ENCODE measurements at regions of chr1 and their contacts with region 1.

Region 1: GRCh38 chr1:62906428-62906886 is 122.5 kb downstream of the ATG4C start:
- DNase-seq: peak; percentile 29
- ATAC-seq: peak; percentile 94
- H3K4me3 Mint-ChIP-seq: no peak overlapping the region
- H3K27ac Mint-ChIP-seq: no peak overlapping the region
- H3K4me1 Mint-ChIP-seq: peaks cover 17% of the 10 kb centered on the region
- H3K27me3 Mint-ChIP-seq: no peaks in the 10 kb centered on the region
- CTCF ChIP-seq: peak; percentile 51; the same call in 1 of the 2 replicates

Region 2: GRCh38 chr1:62841587-62842169 is 64.8 kb before region 1 on chr1:
- CTCF ChIA-PET with region 1: interaction called, 38 read pairs
- POLR2A ChIA-PET with region 1: no interaction called
- DNase-seq: no peak
- ATAC-seq: peak; percentile 41; the same call in 1 of the 2 replicates
- H3K4me3 Mint-ChIP-seq: no peak overlapping the region
- H3K27ac Mint-ChIP-seq: no peak overlapping the region
- H3K4me1 Mint-ChIP-seq: peaks cover 7% of the 10 kb centered on the region
- H3K27me3 Mint-ChIP-seq: no peaks in the 10 kb centered on the region
- CTCF ChIP-seq: peak; percentile 52

Region 3: DNA sequence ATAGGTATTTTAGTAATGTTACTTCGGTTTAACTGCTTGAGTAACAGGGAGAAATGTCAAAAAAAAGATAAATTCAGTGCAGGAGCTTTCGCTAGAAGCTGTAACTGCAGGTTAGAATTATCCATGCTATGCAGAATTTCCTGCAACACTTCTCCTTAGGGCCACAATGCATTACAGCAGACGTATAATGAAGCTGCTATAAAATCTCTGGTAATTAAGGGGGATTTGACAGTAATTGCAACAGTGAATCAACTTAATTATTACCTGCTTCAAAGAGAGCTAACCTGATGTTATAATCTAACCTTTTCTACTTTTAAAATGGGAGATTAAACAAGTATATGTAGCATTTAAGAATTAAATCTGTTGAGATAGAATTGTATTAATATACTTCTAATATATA is 29.9 kb before region 1 on chr1:
- CTCF ChIA-PET with region 1: interaction called, 50 read pairs
- POLR2A ChIA-PET with region 1: no interaction called
- DNase-seq: no peak
- ATAC-seq: no peak
- H3K4me3 Mint-ChIP-seq: no peak overlapping the region
- H3K27ac Mint-ChIP-seq: no peak overlapping the region
- H3K4me1 Mint-ChIP-seq: no peaks in the 10 kb centered on the region
- H3K27me3 Mint-ChIP-seq: no peaks in the 10 kb centered on the region
- CTCF ChIP-seq: no peak

Region 4: GRCh38 chr1:62891956-62892561 is 14.4 kb before region 1 on chr1:
- CTCF ChIA-PET with region 1: interaction called, 34 read pairs
- POLR2A ChIA-PET with region 1: no interaction called
- DNase-seq: no peak
- ATAC-seq: no peak
- H3K4me3 Mint-ChIP-seq: no peak overlapping the region
- H3K27ac Mint-ChIP-seq: no peak overlapping the region
- H3K4me1 Mint-ChIP-seq: peaks cover 7% of the 10 kb centered on the region
- H3K27me3 Mint-ChIP-seq: no peaks in the 10 kb centered on the region; the same call in 1 of the 2 replicates
- CTCF ChIP-seq: no peak

Region 5: GRCh38 chr1:62926681-62927252 is 20.3 kb after region 1 on chr1:
- CTCF ChIA-PET with region 1: interaction called, 19 read pairs
- POLR2A ChIA-PET with region 1: no interaction called
- DNase-seq: no peak
- ATAC-seq: peak; percentile 16; the same call in 1 of the 2 replicates
- H3K4me3 Mint-ChIP-seq: no peak overlapping the region
- H3K27ac Mint-ChIP-seq: no peak overlapping the region
- H3K4me1 Mint-ChIP-seq: no peaks in the 10 kb centered on the region
- H3K27me3 Mint-ChIP-seq: no peaks in the 10 kb centered on the region
- CTCF ChIP-seq: no peak

Region 6: GRCh38 chr1:62962901-62963776 is 56.7 kb after region 1 on chr1:
- CTCF ChIA-PET with region 1: interaction called, 12 read pairs
- POLR2A ChIA-PET with region 1: interaction called, 7 read pairs
- DNase-seq: peak; percentile 85
- ATAC-seq: peak; percentile 92
- H3K4me3 Mint-ChIP-seq: 0 out of 2 replicates have a peak overlapping the region, but pooled peaks have one; percentile 31
- H3K27ac Mint-ChIP-seq: no peak overlapping the region
- H3K4me1 Mint-ChIP-seq: peaks cover 17% of the 10 kb centered on the region
- H3K27me3 Mint-ChIP-seq: no peaks in the 10 kb centered on the region
- CTCF ChIP-seq: peak; percentile 58